Calu3 (cell line): ENCODE measurements at regions of chrX and their contacts with region 1.

Region 1: DNA sequence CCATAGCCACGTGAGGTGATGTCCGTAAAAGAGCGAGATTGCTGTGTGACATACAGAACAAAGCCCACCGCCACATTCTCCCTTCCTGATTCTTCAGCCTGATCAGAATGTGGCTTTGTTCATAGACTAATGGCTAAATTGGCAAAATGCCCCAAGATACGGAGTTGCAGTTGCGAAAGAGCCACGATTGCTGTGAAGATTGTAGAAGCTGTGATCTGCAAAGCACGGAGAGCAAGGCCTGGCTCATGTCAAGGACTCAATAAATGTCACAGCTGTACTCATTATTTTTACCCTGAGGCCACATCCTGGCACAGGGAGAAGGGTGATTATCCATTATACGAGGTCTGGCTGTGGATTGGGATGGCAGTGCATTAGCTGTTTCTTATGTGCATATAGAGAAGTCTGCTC is 34.2 kb downstream of the ARSD start:
- DNase-seq: peak; percentile 54
- H3K4me3 Mint-ChIP-seq: no peak overlapping the region
- H3K27ac Mint-ChIP-seq: peak overlapping the region; percentile 52
- H3K4me1 Mint-ChIP-seq: peaks cover 62% of the 10 kb centered on the region
- H3K27me3 Mint-ChIP-seq: no peaks in the 10 kb centered on the region
- CTCF ChIP-seq: no peak

Region 2: DNA sequence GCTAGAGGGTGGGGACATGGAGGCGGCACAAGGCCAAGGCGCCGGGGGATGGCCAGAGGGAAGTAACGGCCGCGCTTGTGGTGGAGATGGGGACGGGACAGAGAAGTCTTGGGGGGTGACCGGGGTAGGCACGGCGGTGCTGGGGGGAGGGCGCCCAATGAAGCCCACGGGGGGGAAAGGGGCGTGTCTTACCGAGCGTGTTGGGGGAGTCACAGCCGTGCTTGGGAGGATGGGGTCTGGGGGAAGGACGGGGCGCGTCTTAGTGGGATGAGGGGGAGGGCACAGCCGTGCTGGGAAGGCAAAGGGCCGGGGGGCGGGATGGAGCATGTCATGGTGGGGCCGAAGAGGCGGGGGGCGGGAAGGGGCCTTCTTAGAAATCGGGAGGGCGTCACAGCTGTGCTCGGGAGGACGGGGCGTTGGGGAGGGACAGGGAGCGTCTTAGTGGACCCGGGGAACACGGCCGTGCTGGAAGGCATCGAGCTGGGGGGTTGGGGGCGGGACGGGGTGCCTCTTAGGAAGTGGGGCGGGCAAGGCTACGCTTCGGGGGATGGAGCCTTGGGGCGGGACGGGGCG is 33.4 kb after region 1 on chrX:
- CTCF ChIA-PET with region 1: no interaction called
- intact Hi-C with region 1: loop called (anchors 2 kb)
- DNase-seq: peak; percentile 44
- H3K4me3 Mint-ChIP-seq: peak overlapping the region; percentile 72
- H3K27ac Mint-ChIP-seq: peak overlapping the region; percentile 98
- H3K4me1 Mint-ChIP-seq: peaks cover 8% of the 10 kb centered on the region
- H3K27me3 Mint-ChIP-seq: no peaks in the 10 kb centered on the region
- CTCF ChIP-seq: no peak

Region 3: GRCh38 chrX:3026065-3026815 is 131.4 kb after region 1 on chrX:
- CTCF ChIA-PET with region 1: no interaction called
- intact Hi-C with region 1: loop called (anchors 5 kb)
- DNase-seq: peak; percentile 34
- H3K4me3 Mint-ChIP-seq: peak overlapping the region; percentile 41
- H3K27ac Mint-ChIP-seq: peak overlapping the region; percentile 70
- H3K4me1 Mint-ChIP-seq: no peaks in the 10 kb centered on the region
- H3K27me3 Mint-ChIP-seq: no peaks in the 10 kb centered on the region
- CTCF ChIP-seq: no peak